Adrenal gland (tissue), 19 donors: ENCODE measurements at regions of chr14 and their contacts with region 1.

Region 1: DNA sequence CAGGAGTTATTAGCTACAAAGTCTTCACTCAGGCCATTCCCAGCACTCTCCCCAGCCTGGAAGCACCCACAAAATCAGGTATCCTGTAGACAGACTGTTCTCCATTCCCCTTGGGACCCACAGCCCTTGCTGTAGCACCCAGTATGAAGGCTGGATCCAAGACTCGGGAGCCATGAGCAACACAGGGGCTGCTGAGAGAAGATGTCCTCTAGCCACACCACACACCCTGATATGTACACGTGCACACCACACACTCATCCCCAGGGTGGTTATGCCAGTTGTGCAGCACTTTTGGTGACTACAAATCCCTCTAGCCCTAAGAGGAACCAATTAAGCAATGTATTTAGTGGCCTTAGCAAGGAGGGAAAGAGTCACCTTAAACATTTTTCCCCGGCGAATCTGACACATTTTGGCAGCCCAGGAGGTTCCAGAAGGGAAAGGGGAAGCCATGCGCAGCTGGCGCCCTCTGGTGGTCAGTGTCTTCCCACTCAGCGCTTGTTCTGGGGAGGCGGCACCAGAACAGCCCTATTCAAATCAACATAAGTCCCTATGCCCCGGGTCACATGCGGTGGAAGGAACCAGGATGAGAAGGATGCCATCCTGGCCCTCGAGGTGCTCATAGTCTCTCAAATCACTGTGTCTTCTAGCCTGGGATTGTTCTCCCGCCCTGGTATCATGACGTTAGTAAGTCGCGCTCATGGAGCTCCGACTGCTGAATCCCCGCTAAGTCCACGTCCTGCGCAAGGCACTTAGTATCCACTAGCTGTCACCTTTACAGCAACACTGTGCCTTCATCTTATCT is 96.9 kb downstream of the GCH1 start:
- DNase-seq: peak; percentile 83 to 94 (median 85)
- H3K4me3 ChIP-seq: no peak overlapping the region
- H3K27ac ChIP-seq: no peak overlapping the region
- H3K4me1 ChIP-seq: no peaks in the 10 kb centered on the region
- H3K27me3 ChIP-seq: no peaks in the 10 kb centered on the region
- CTCF ChIP-seq: peak; percentile 80 to 97 (median 91)
- POLR2A ChIP-seq: no peak

Region 2: GRCh38 chr14:54555651-54556050 is 250.1 kb before region 1 on chr14:
- intact Hi-C with region 1: loop called (anchors 10 kb)
- DNase-seq: no peak
- H3K4me3 ChIP-seq: no peak overlapping the region
- H3K27ac ChIP-seq: no peak overlapping the region
- H3K4me1 ChIP-seq: no peaks in the 10 kb centered on the region
- H3K27me3 ChIP-seq: no peaks in the 10 kb centered on the region
- CTCF ChIP-seq: no peak
- POLR2A ChIP-seq: no peak

Region 3: GRCh38 chr14:54566410-54567223 is 239.1 kb before region 1 on chr14 and contains the start of gene SAMD4A:
- intact Hi-C with region 1: loop called in 1 of 2 experiments (anchors 10 kb)
- DNase-seq: peak; percentile 74 to 90 (median 81)
- H3K4me3 ChIP-seq: peak within 1 kb of the TSS; percentile 27 to 67 (median 58)
- H3K27ac ChIP-seq: peak within 1 kb of the TSS; percentile 96 to 99 (median 98)
- H3K4me1 ChIP-seq: peaks cover 0 to 23% of the 10 kb centered on the region in 2 donors
- H3K27me3 ChIP-seq: no peaks in the 10 kb centered on the region
- CTCF ChIP-seq: peak in 5 of 6 experiments; percentile 25 to 40 (median 38)
- POLR2A ChIP-seq: peak; percentile 67 to 70
- total RNA-seq, gene SAMD4A: 3.1 to 13.2 (median 10.2) TPM

Region 4: GRCh38 chr14:54877015-54877702 is 71.4 kb after region 1 on chr14:
- intact Hi-C with region 1: no loop called
- DNase-seq: no peak
- H3K4me3 ChIP-seq: no peak overlapping the region
- H3K27ac ChIP-seq: peak overlapping the region in 2 of 5 donors; percentile 40 to 41
- H3K4me1 ChIP-seq: peaks cover 2 to 15% of the 10 kb centered on the region in 2 donors
- H3K27me3 ChIP-seq: no peaks in the 10 kb centered on the region
- CTCF ChIP-seq: no peak
- POLR2A ChIP-seq: no peak